Activated CD4-positive, alpha-beta memory T cell treated with anti-CD3 and anti-CD28 coated beads for 36 hours (primary cell): ENCODE measurements at regions of chr10 and their contacts with region 1.

Region 1: GRCh38 chr10:102476466-102477141 is 25.3 kb upstream of the C10orf95 start:
- DNase-seq: no peak
- H3K4me3 Mint-ChIP-seq: no peak overlapping the region
- H3K27ac Mint-ChIP-seq: peak overlapping the region; percentile 65
- H3K4me1 Mint-ChIP-seq: peaks cover 21% of the 10 kb centered on the region
- H3K27me3 Mint-ChIP-seq: no peaks in the 10 kb centered on the region

Region 2: GRCh38 chr10:102384053-102384452 is 92.6 kb before region 1 on chr10:
- CTCF ChIA-PET with region 1: interaction called, 13 read pairs
- POLR2A ChIA-PET with region 1: no interaction called
- intact Hi-C with region 1: no loop called
- DNase-seq: peak; percentile 37
- H3K4me3 Mint-ChIP-seq: no peak overlapping the region
- H3K27ac Mint-ChIP-seq: no peak overlapping the region
- H3K4me1 Mint-ChIP-seq: peaks cover 4% of the 10 kb centered on the region
- H3K27me3 Mint-ChIP-seq: no peaks in the 10 kb centered on the region

Region 3: GRCh38 chr10:102420810-102421644 is 55.6 kb before region 1 on chr10 and contains the start of gene FBXL15:
- CTCF ChIA-PET with region 1: interaction called, 29 read pairs
- POLR2A ChIA-PET with region 1: no interaction called
- intact Hi-C with region 1: loop called (anchors 5 kb)
- DNase-seq: peak; percentile 98
- H3K4me3 Mint-ChIP-seq: peak within 1 kb of the TSS; percentile 94
- H3K27ac Mint-ChIP-seq: peak within 1 kb of the TSS; percentile 92
- H3K4me1 Mint-ChIP-seq: peaks cover 35% of the 10 kb centered on the region
- H3K27me3 Mint-ChIP-seq: peaks cover 20% of the 10 kb centered on the region
- total RNA-seq, gene FBXL15: 10.8 to 11.4 TPM

Region 4: GRCh38 chr10:102450194-102450938 is 26.2 kb before region 1 on chr10:
- CTCF ChIA-PET with region 1: interaction called, 15 read pairs
- POLR2A ChIA-PET with region 1: interaction called, 7 read pairs
- intact Hi-C with region 1: loop called (anchors 2 kb)
- DNase-seq: peak; percentile 90
- H3K4me3 Mint-ChIP-seq: peak overlapping the region; percentile 94
- H3K27ac Mint-ChIP-seq: peak overlapping the region; percentile 94
- H3K4me1 Mint-ChIP-seq: peaks cover 35% of the 10 kb centered on the region
- H3K27me3 Mint-ChIP-seq: no peaks in the 10 kb centered on the region

Region 5: DNA sequence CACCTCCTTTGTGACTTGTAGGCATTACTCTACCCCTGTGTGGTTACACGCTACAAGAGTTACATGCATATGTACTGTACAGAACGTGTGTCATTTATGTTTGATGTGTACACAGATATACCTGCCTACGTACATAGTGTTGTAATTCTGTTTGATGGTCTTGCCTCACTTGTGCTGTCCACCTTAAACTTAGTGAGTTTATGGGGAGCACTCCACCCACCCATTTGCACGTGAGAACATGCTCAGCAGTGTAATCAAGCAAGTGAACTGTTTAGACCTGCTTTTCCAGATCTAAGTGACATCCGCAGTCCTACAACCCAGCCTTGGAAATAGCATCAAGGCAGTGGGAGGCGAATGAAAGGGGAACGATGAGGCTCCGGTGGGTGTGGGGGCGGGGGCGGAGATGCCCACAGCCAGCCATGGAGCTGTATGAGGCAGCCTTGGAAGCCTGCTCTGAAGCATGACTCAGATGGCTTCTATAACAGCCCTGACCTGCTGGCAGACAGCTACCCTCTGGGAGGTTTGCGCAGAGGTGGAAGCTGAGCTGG is 79.3 kb after region 1 on chr10:
- CTCF ChIA-PET with region 1: no interaction called
- POLR2A ChIA-PET with region 1: no interaction called
- intact Hi-C with region 1: no loop called
- DNase-seq: no peak
- H3K4me3 Mint-ChIP-seq: no peak overlapping the region
- H3K27ac Mint-ChIP-seq: no peak overlapping the region
- H3K4me1 Mint-ChIP-seq: peaks cover 10% of the 10 kb centered on the region
- H3K27me3 Mint-ChIP-seq: no peaks in the 10 kb centered on the region

Region 6: DNA sequence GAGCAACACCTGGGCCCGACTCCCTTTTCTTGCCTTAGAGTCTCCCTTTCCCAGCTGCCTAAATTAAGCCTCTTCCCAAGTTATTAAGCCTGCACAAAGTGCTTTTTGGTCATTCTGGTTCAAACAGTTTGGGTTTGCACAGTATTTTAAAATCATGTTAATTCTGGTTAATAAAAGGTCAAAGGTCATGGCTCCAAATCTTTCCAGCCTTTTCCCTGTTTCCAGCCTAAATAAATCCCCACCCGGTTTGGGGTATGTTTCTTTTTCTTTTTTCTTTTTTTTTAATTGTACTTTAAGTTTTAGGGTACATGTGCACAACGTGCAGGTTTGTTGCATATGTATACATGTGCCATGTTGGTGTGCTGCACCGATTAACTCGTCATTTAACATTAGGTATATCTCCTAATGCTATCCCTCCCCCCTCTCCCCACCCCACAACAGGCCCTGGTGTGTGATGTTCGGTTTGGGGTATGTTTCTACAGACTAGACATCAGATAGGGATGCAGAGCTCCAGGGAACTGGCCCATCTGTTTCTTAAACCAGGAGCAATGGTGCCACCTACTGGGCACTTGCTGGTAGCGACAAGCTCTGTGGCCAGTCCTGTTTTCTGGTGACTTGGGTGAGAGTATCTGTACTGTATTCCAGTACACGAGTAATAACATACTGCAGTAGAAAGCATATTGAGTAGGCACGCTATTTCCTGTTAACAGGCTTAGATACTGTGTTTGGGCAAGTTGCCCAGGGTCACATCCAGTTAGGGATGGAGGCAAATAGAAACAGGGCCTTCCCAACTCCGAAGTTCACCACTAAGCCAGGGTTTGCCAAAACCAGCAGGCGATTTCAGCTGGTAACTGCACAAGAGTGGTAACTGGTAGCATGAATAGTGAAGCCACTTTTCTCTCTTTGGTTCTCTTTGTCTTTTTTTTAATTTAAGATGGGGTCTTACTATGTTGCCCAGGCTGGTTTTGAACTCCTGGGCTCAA is 107.1 kb after region 1 on chr10:
- CTCF ChIA-PET with region 1: interaction called, 33 read pairs
- POLR2A ChIA-PET with region 1: no interaction called
- intact Hi-C with region 1: no loop called
- DNase-seq: peak; percentile 90
- H3K4me3 Mint-ChIP-seq: no peak overlapping the region
- H3K27ac Mint-ChIP-seq: no peak overlapping the region
- H3K4me1 Mint-ChIP-seq: peaks cover 13% of the 10 kb centered on the region
- H3K27me3 Mint-ChIP-seq: no peaks in the 10 kb centered on the region